HEK293 (cell line): ENCODE measurements at regions of chr7 and their contacts with region 1.

Region 1: GRCh38 chr7:149067876-149068275 is 22.6 kb downstream of the ZNF786 start:
- H3K4me3 ChIP-seq: no peak overlapping the region
- H3K27ac ChIP-seq: no peak overlapping the region
- H3K4me1 ChIP-seq: no peaks in the 10 kb centered on the region
- CTCF ChIP-seq: no peak

Region 2: GRCh38 chr7:149005241-149006050 is 62.4 kb before region 1 on chr7:
- CTCF ChIA-PET with region 1: interaction called, 27 read pairs
- POLR2A ChIA-PET with region 1: no interaction called
- H3K4me3 ChIP-seq: no peak overlapping the region
- H3K27ac ChIP-seq: no peak overlapping the region
- H3K4me1 ChIP-seq: no peaks in the 10 kb centered on the region
- CTCF ChIP-seq: peak; percentile 71

Region 3: DNA sequence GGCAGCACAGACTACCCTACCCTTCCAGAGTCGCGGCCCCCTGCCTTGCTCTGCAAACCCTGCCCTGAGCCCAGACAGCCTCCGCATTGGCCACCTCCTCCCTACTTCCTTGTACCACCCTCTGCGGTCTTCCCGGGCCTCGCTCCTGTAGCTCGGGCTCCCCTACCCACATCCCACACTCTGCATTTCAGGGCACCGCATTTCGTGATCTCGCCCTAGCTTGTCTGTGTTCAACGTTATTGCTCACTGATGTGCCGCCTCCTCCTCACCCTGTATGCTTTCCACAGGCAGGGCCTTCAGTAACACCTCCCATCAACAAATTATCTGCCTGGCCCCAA is 46.2 kb before region 1 on chr7:
- CTCF ChIA-PET with region 1: interaction called, 10 read pairs
- POLR2A ChIA-PET with region 1: interaction called, 3 read pairs
- H3K4me3 ChIP-seq: no peak overlapping the region
- H3K27ac ChIP-seq: no peak overlapping the region
- H3K4me1 ChIP-seq: peaks cover 2% of the 10 kb centered on the region; the same call in 1 of the 2 replicates
- CTCF ChIP-seq: no peak

Region 4: GRCh38 chr7:149028346-149029109 is 39.3 kb before region 1 on chr7 and contains the start of gene PDIA4:
- CTCF ChIA-PET with region 1: interaction called, 10 read pairs
- POLR2A ChIA-PET with region 1: interaction called, 17 read pairs
- H3K4me3 ChIP-seq: peak within 1 kb of the TSS; percentile 94
- H3K27ac ChIP-seq: peak within 1 kb of the TSS; percentile 83
- H3K4me1 ChIP-seq: no peaks in the 10 kb centered on the region
- CTCF ChIP-seq: peak; percentile 62

Region 5: GRCh38 chr7:149046416-149046815 is 21.5 kb before region 1 on chr7:
- CTCF ChIA-PET with region 1: interaction called, 14 read pairs
- POLR2A ChIA-PET with region 1: no interaction called
- H3K4me3 ChIP-seq: no peak overlapping the region
- H3K27ac ChIP-seq: no peak overlapping the region
- H3K4me1 ChIP-seq: no peaks in the 10 kb centered on the region
- CTCF ChIP-seq: no peak

Region 6: DNA sequence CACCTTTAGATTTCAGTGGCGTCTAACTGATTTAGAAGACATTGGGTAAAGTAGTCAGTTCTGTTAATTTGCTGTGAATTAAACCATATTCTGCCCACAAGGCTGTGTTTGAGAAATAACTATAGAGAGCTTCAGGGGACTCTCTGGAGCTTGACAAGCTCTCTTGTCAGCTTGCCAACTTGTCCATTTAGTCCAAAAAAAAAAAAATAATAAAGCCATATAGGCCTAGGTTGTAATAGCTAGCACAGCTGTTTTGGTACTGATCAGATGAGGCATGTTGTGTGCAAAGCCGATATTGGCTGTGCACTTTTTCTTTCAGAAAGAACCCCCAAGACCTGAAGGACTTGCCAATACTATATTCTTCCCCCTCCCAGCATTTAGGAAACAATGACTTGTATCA is 107.3 kb after region 1 on chr7:
- CTCF ChIA-PET with region 1: no interaction called
- POLR2A ChIA-PET with region 1: no interaction called
- H3K4me3 ChIP-seq: no peak overlapping the region
- H3K27ac ChIP-seq: no peak overlapping the region
- H3K4me1 ChIP-seq: no peaks in the 10 kb centered on the region
- CTCF ChIP-seq: no peak

Region 7: GRCh38 chr7:149474309-149475114 is 406.6 kb after region 1 on chr7:
- CTCF ChIA-PET with region 1: no interaction called
- POLR2A ChIA-PET with region 1: no interaction called
- H3K4me3 ChIP-seq: no peak overlapping the region
- H3K27ac ChIP-seq: no peak overlapping the region
- H3K4me1 ChIP-seq: no peaks in the 10 kb centered on the region
- CTCF ChIP-seq: no peak